ENCODE measurements at regions of chr7 and their contacts with region 1.

Region 1: GRCh38 chr7:69912846-69913245 is 314.6 kb downstream of the AUTS2 start:
- DNase-seq: no peak

Region 2: DNA sequence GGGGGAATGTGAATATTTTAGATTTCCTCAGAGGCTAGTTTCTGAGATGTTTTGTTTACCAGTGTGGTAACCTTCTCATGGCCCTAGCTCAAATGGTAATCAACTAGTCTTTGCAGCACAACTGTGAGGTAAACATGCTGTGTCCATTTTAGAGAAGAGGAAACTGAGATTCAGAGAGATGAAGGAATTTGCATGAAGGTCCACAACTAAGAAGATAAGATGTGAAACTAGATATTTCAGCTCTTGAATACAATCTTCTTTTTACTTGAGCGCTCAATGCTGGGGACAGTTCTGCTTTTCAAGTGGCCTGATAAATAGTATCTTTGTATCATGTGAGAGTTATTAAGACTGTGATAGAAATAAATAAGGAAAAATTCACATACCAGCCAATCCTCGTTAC is 69.2 kb before region 1 on chr7:
- intact Hi-C with region 1: loop called in 1 of 2 experiments (anchors 2 kb)
- DNase-seq: no peak

Measured in posterior vena cava (tissue), 2 donors.